ENCODE measurements at regions of chr10 and their contacts with region 1.

Region 1: DNA sequence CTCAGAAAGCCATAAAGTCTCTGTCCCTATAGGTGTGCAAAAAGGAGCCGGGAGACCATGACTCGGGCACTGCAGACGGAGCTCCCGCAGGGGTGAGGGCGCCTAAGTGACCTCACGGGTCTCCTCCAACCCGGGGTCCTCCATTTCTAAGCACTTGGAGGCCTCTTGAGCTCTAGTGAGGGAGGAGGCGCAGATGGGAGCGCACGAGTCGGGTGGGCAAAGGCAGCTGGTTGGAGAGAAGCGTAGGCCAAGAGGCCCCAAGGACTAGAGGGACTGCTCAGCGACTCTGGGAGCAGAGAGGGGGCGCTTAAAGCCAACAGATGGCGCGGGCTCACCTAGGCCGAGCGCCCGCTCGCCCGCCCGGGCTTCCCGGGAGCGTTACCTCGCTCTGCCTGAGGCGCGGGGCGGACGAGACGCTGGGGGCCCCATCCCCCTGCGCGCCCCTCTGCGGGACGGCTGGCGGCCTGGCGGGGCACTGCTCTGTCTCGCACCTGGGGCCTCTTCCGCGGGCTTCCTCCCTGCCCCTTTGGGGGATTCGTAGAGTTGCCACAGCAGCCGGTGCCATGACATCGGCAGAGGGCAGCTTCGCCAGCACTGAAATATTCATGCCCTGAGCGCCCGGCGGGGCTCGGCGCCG is 518 bp upstream of the CDH23 start:
- DNase-seq: peak; percentile 49 to 72
- ATAC-seq: peak; percentile 85 to 93 (median 88)
- H3K4me3 ChIP-seq: peak overlapping the region; percentile 63
- H3K27ac ChIP-seq: no peak overlapping the region
- H3K4me1 ChIP-seq: peaks cover 12% of the 10 kb centered on the region
- H3K27me3 ChIP-seq: peaks cover 0 to 63% (median 18%) of the 10 kb centered on the region in 3 donors
- CTCF ChIP-seq: peak; percentile 50

Region 2: DNA sequence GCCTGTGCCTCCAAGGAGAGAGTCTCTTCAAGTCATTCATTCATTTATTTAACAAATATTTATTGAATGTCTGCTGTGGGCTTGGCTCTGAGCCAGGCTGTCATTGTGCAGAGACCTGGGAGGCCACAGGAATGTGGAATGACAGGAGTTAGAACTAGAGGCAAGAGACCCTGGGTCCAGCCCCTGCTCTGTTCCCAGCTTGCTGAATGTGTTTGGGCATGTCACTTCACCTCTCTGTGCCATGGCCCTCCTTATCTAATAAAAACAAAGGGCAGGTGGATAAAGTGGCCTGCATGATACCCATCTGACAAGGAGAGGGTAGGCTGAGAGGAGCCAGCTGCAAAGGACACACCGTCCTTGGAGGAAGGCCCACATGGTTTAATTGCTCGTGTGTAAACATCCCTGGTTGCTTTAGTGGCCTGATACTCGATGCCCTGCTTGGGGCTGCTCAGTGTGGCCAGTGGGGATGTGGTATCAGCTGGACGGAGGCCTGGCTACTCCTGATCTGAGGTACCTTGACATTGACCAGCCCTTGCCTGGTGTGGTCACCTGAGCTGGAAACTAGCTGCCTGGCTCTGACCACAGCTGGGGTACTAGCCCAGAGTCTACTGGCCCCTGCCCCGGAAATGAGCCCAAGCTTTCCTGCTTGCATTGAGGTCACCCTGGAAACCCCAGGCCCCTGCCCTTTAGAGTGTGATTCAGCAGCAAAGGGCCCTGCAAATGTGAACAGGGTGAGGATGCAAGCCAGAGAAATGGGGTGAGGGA is 116.8 kb after region 1 on chr10:
- intact Hi-C with region 1: no loop called
- DNase-seq: no peak
- ATAC-seq: peak in 1 of 4 donors; percentile 84
- H3K4me3 ChIP-seq: no peak overlapping the region
- H3K27ac ChIP-seq: no peak overlapping the region
- H3K4me1 ChIP-seq: no peaks in the 10 kb centered on the region
- H3K27me3 ChIP-seq: no peaks in the 10 kb centered on the region
- CTCF ChIP-seq: no peak

Region 3: DNA sequence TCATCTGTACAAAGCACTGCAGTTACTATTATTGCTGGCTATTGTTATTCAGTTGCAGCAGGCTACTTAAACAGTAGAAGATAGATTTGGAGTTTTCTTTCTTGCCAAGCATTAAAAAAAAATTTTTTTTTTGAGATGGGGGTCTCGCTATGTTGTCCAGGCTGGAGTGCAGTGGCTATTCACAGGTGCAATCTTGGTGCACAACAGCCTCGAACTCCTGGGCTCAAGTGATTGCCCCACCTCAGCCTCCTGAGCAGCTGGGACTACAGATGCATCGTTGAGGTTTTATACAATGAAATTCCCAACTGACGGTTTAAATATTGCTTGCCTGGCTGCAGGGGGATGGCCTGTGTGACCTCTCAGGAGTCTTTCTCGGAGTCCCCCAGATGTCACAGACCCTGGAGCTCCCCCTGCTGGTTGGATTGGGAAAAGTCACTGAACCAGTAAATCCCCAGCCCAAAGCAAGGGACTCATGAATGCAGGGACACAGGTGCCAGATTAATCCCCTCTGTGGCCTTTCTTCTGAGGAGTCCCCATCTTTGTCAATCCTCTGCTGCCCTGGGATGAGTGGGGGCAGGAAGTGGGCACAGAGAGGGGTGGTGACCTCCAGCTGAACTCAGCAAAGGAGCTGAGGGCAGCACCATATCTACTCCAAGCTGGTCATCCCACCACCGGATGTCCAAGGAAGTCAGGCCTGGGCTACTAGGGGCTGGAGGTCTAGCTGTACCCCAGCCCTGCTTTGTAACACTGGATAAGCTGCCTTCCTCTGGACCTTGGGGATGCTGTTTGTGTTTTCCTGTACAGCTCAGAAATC is 173.8 kb after region 1 on chr10:
- intact Hi-C with region 1: loop called (anchors 2 to 5 kb)
- DNase-seq: peak; percentile 69 to 79
- ATAC-seq: peak; percentile 60 to 76 (median 66)
- H3K4me3 ChIP-seq: no peak overlapping the region
- H3K27ac ChIP-seq: no peak overlapping the region
- H3K4me1 ChIP-seq: peaks cover 1% of the 10 kb centered on the region
- H3K27me3 ChIP-seq: no peaks in the 10 kb centered on the region
- CTCF ChIP-seq: peak; percentile 83

Region 4: GRCh38 chr10:71608819-71609768 is 212.9 kb after region 1 on chr10:
- intact Hi-C with region 1: loop called in 1 of 2 experiments (anchors 5 kb)
- DNase-seq: peak; percentile 82 to 90
- ATAC-seq: peak; percentile 29 to 60 (median 42)
- H3K4me3 ChIP-seq: no peak overlapping the region
- H3K27ac ChIP-seq: no peak overlapping the region
- H3K4me1 ChIP-seq: peaks cover 19% of the 10 kb centered on the region
- H3K27me3 ChIP-seq: no peaks in the 10 kb centered on the region
- CTCF ChIP-seq: peak; percentile 63